Heart right ventricle (tissue), 16 donors: ENCODE measurements at regions of chr1 and their contacts with region 1.

Region 1: GRCh38 chr1:119038363-119038762 is 50.2 kb upstream of the TBX15 start:
- DNase-seq: no peak
- ATAC-seq: no peak
- H3K4me3 ChIP-seq: no peak overlapping the region
- H3K27ac ChIP-seq: no peak overlapping the region
- H3K4me1 ChIP-seq: peaks cover 0 to 5% (median 0%) of the 10 kb centered on the region in 9 donors
- H3K27me3 ChIP-seq: no peaks in the 10 kb centered on the region
- CTCF ChIP-seq: no peak

Region 2: GRCh38 chr1:118821801-118822200 is 216.6 kb before region 1 on chr1:
- intact Hi-C with region 1: no loop called
- DNase-seq: no peak
- ATAC-seq: no peak
- H3K4me3 ChIP-seq: no peak overlapping the region
- H3K27ac ChIP-seq: no peak overlapping the region
- H3K4me1 ChIP-seq: no peaks in the 10 kb centered on the region
- H3K27me3 ChIP-seq: peaks cover 0 to 5% (median 0%) of the 10 kb centered on the region in 7 donors
- CTCF ChIP-seq: no peak

Region 3: DNA sequence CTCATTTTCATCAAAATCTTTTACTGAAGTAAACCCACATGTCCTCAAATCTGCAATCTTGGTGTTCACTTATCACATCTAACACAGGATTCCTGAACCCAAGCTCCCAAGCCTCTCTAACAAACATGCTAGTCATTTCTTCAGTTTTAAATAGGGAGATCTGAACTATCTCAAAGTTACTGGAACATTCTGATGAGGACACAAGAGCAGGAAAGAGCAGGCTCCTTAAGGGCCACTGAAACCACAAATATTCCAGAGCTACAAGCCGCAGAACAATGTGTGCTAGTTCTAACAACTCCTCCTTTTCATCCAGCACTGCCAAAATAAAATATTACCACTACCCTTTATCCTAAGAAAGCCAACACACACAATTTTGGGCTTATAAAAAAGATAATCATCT is 63.2 kb after region 1 on chr1:
- intact Hi-C with region 1: loop called in 1 of 10 experiments (anchors 2 kb)
- DNase-seq: no peak
- ATAC-seq: peak in 6 of 8 donors; percentile 67 to 94 (median 76)
- H3K4me3 ChIP-seq: no peak overlapping the region
- H3K27ac ChIP-seq: peak overlapping the region in 4 of 10 donors; percentile 10 to 48 (median 37)
- H3K4me1 ChIP-seq: peaks cover 0 to 11% (median 0%) of the 10 kb centered on the region in 9 donors
- H3K27me3 ChIP-seq: no peaks in the 10 kb centered on the region
- CTCF ChIP-seq: no peak